CD8-positive, alpha-beta T cell (primary cell): ENCODE measurements at regions of chr16 and their contacts with region 1.

Region 1: GRCh38 chr16:11407047-11407982 is 62.1 kb downstream of the RMI2 start:
- DNase-seq: peak; percentile 37 to 78 (median 61)
- ATAC-seq: peak; percentile 82
- H3K4me3 ChIP-seq: no peak overlapping the region
- H3K4me3 Mint-ChIP-seq: no peak overlapping the region
- H3K27ac ChIP-seq: no peak overlapping the region
- H3K27ac Mint-ChIP-seq: no peak overlapping the region
- H3K4me1 ChIP-seq: no peaks in the 10 kb centered on the region
- H3K4me1 Mint-ChIP-seq: no peaks in the 10 kb centered on the region
- H3K27me3 ChIP-seq: no peaks in the 10 kb centered on the region
- H3K27me3 Mint-ChIP-seq: no peaks in the 10 kb centered on the region
- CTCF ChIP-seq: peak; percentile 57

Region 2: DNA sequence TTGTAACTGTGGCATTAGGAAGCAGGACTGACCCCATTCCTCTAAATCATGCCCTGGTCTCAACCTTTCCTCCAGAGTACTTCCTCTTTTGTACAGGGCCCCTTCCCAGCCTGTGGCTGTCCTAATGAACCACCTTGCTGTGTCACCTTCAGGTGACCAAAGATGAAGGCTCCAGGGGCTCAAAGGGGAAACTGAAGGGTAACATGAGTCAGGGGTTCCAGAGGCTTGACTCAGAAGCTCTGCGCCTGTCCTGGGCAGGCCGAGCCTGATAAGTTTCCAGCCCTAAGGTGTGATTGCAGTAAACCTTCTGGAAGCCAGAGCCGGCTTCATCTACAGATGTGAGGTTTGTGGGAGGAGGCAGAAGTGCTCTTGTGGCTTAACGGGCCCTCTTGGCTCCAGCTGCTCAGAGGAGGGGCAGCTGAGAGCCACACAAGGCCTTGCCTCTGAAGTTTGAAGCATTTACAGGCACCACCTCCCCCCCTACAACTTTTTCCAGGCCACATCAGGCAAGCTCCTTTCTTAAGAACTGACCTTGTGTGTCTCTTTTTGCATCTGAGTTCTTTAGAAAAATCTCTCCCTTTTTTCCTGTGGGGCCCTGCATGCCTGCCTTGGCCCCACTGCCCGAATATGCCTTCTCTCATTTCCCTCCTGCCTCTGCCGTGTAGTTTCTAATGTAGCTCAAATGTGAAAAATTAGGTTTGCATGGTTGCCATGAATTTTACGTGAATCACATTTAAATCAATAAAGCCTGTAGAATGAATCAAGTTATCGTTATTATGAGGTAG is 313.1 kb before region 1 on chr16:
- CTCF ChIA-PET with region 1: no interaction called
- POLR2A ChIA-PET with region 1: no interaction called
- intact Hi-C with region 1: no loop called
- DNase-seq: peak in 2 of 9 experiments; percentile 15 to 28
- ATAC-seq: peak; percentile 44
- H3K4me3 ChIP-seq: no peak overlapping the region
- H3K4me3 Mint-ChIP-seq: peak overlapping the region; percentile 17
- H3K27ac ChIP-seq: no peak overlapping the region
- H3K27ac Mint-ChIP-seq: peak overlapping the region; percentile 83
- H3K4me1 ChIP-seq: peaks cover 30% of the 10 kb centered on the region
- H3K4me1 Mint-ChIP-seq: peaks cover 31% of the 10 kb centered on the region
- H3K27me3 ChIP-seq: no peaks in the 10 kb centered on the region
- H3K27me3 Mint-ChIP-seq: no peaks in the 10 kb centered on the region
- CTCF ChIP-seq: no peak

Region 3: GRCh38 chr16:11396241-11397048 is 10.9 kb before region 1 on chr16:
- CTCF ChIA-PET with region 1: interaction called, 48 read pairs
- POLR2A ChIA-PET with region 1: no interaction called
- intact Hi-C with region 1: no loop called
- DNase-seq: peak; percentile 46 to 78 (median 65)
- ATAC-seq: peak; percentile 85
- H3K4me3 ChIP-seq: no peak overlapping the region
- H3K4me3 Mint-ChIP-seq: no peak overlapping the region
- H3K27ac ChIP-seq: no peak overlapping the region
- H3K27ac Mint-ChIP-seq: no peak overlapping the region
- H3K4me1 ChIP-seq: no peaks in the 10 kb centered on the region
- H3K4me1 Mint-ChIP-seq: no peaks in the 10 kb centered on the region
- H3K27me3 ChIP-seq: no peaks in the 10 kb centered on the region
- H3K27me3 Mint-ChIP-seq: no peaks in the 10 kb centered on the region
- CTCF ChIP-seq: peak; percentile 99

Region 4: GRCh38 chr16:11423315-11424117 is 16.2 kb after region 1 on chr16:
- CTCF ChIA-PET with region 1: interaction called, 10 read pairs
- POLR2A ChIA-PET with region 1: no interaction called
- intact Hi-C with region 1: no loop called
- DNase-seq: no peak
- ATAC-seq: no peak
- H3K4me3 ChIP-seq: no peak overlapping the region
- H3K4me3 Mint-ChIP-seq: no peak overlapping the region
- H3K27ac ChIP-seq: no peak overlapping the region
- H3K27ac Mint-ChIP-seq: no peak overlapping the region
- H3K4me1 ChIP-seq: no peaks in the 10 kb centered on the region
- H3K4me1 Mint-ChIP-seq: no peaks in the 10 kb centered on the region
- H3K27me3 ChIP-seq: no peaks in the 10 kb centered on the region
- H3K27me3 Mint-ChIP-seq: no peaks in the 10 kb centered on the region
- CTCF ChIP-seq: no peak

Region 5: DNA sequence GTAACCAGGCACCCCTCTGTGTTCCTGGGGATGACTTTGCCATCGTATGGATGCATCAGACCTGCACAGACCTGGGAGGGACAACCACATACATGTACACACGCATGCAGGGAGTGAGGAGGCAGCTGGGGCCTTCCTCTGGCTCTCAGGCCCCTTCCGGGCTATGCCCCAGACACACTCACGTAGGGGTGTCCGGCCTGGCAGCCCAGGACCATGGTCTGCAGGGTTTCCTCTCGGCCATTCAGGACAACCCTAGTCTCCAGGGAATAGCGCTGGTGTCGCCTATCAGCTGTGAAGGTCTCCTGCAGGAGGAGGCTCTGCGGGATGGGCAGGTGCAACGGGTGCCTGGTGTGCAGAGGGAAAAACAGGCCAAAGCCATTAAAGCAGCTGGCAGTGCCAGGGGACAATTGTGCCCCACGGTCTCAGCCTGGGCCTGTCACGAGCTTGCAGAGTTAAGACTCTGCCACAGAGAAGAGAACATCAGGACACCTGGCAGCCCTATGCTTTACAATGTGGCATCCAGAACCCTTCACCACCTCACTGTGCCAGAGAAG is 39.3 kb after region 1 on chr16:
- CTCF ChIA-PET with region 1: interaction called, 10 read pairs
- POLR2A ChIA-PET with region 1: no interaction called
- intact Hi-C with region 1: no loop called
- DNase-seq: no peak
- ATAC-seq: no peak
- H3K4me3 ChIP-seq: no peak overlapping the region
- H3K4me3 Mint-ChIP-seq: no peak overlapping the region
- H3K27ac ChIP-seq: no peak overlapping the region
- H3K27ac Mint-ChIP-seq: no peak overlapping the region
- H3K4me1 ChIP-seq: no peaks in the 10 kb centered on the region
- H3K4me1 Mint-ChIP-seq: no peaks in the 10 kb centered on the region
- H3K27me3 ChIP-seq: no peaks in the 10 kb centered on the region
- H3K27me3 Mint-ChIP-seq: no peaks in the 10 kb centered on the region
- CTCF ChIP-seq: no peak

Region 6: GRCh38 chr16:11530171-11530940 is 123.0 kb after region 1 on chr16:
- CTCF ChIA-PET with region 1: interaction called, 14 read pairs
- POLR2A ChIA-PET with region 1: no interaction called
- intact Hi-C with region 1: loop called (anchors 2 to 5 kb)
- DNase-seq: no peak
- ATAC-seq: no peak
- H3K4me3 ChIP-seq: no peak overlapping the region
- H3K4me3 Mint-ChIP-seq: no peak overlapping the region
- H3K27ac ChIP-seq: no peak overlapping the region
- H3K27ac Mint-ChIP-seq: no peak overlapping the region
- H3K4me1 ChIP-seq: no peaks in the 10 kb centered on the region
- H3K4me1 Mint-ChIP-seq: peaks cover 3% of the 10 kb centered on the region
- H3K27me3 ChIP-seq: no peaks in the 10 kb centered on the region
- H3K27me3 Mint-ChIP-seq: no peaks in the 10 kb centered on the region
- CTCF ChIP-seq: no peak